ENCODE measurements at regions of chr11 and their contacts with region 1.

Region 1: DNA sequence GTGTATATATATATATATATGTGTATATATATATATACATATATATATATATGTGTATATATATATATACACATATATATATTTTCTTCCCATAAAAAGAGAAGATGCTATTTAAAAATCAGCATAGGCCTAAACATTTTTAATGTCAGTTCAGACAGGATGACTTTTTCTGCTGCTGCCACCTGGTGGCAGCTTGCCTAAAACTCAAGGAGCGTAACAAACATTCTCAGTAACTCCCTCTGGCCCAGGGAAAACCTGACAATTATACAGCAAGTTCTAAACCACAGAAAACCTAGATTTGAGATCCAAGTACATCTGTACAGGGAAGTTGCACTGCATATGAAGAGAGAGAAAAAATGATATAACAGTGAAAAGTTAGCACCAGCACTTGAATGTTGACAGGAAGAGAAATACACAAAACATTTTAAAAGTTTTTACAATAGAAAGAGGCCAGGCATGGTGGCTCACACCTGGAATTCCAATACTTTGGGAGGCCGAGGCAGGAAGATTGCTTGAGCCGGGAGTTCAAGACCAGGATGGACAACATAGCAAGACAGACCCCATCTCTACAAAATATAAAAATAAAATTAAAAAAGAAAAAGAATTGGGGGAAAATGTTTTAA is 16.6 kb downstream of the OR8A1 start:
- DNase-seq: peak; percentile 56
- H3K4me3 ChIP-seq: no peak overlapping the region
- H3K27ac ChIP-seq: no peak overlapping the region
- H3K4me1 ChIP-seq: no peaks in the 10 kb centered on the region
- CTCF ChIP-seq: peak; percentile 82

Region 2: GRCh38 chr11:124415356-124415923 is 170.9 kb before region 1 on chr11:
- CTCF ChIA-PET with region 1: no interaction called
- POLR2A ChIA-PET with region 1: interaction called, 6 read pairs
- intact Hi-C with region 1: loop called (anchors 1 kb)
- DNase-seq: peak; percentile 64
- H3K4me3 ChIP-seq: no peak overlapping the region
- H3K27ac ChIP-seq: no peak overlapping the region
- H3K4me1 ChIP-seq: no peaks in the 10 kb centered on the region
- CTCF ChIP-seq: peak; percentile 90

Region 3: GRCh38 chr11:124470516-124471227 is 115.7 kb before region 1 on chr11:
- CTCF ChIA-PET with region 1: no interaction called
- POLR2A ChIA-PET with region 1: no interaction called
- intact Hi-C with region 1: no loop called
- DNase-seq: no peak
- H3K4me3 ChIP-seq: no peak overlapping the region
- H3K27ac ChIP-seq: no peak overlapping the region
- H3K4me1 ChIP-seq: no peaks in the 10 kb centered on the region
- CTCF ChIP-seq: no peak

Measured in OCI-LY7 (cell line).